Panc1 (cell line): ENCODE measurements at regions of chr15 and their contacts with region 1.

Region 1: GRCh38 chr15:49255966-49256759 is 86.1 kb downstream of the GALK2 start:
- DNase-seq: no peak
- ATAC-seq: no peak
- H3K4me3 ChIP-seq: no peak overlapping the region
- H3K27ac ChIP-seq: no peak overlapping the region
- H3K4me1 ChIP-seq: no peaks in the 10 kb centered on the region
- H3K27me3 ChIP-seq: no peaks in the 10 kb centered on the region
- CTCF ChIP-seq: no peak

Region 2: DNA sequence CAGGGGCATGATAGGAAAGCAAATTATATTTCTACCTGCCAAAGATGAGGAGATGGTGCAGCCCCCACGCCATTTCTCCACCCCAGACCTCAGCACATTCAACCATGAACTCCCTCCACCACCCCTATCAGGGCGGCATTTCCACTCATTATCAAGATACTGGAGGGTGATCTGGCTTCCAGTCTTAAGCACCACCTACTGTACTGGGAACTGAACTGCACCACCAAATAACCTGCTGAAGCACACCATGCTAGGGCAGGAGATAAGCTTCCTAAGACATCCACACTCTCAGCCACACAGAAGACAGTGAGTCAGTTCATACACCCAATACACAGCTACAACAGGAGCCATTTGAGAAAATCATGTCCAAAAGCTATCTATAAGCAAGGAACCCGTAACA is 265.6 kb after region 1 on chr15:
- CTCF ChIA-PET with region 1: no interaction called
- POLR2A ChIA-PET with region 1: no interaction called
- in situ Hi-C with region 1: no loop called
- intact Hi-C with region 1: loop called (anchors 10 kb)
- DNase-seq: no peak
- ATAC-seq: no peak
- H3K4me3 ChIP-seq: no peak overlapping the region
- H3K27ac ChIP-seq: no peak overlapping the region
- H3K4me1 ChIP-seq: no peaks in the 10 kb centered on the region
- H3K27me3 ChIP-seq: no peaks in the 10 kb centered on the region
- CTCF ChIP-seq: peak; percentile 13; the same call in 1 of the 2 replicates